GM10248 (cell line): ENCODE measurements at regions of chr19 and their contacts with region 1.

Region 1: GRCh38 chr19:1540365-1540925 is 16.6 kb downstream of the PLK5 start:
- DNase-seq: no peak
- CTCF ChIP-seq: no peak

Region 2: DNA sequence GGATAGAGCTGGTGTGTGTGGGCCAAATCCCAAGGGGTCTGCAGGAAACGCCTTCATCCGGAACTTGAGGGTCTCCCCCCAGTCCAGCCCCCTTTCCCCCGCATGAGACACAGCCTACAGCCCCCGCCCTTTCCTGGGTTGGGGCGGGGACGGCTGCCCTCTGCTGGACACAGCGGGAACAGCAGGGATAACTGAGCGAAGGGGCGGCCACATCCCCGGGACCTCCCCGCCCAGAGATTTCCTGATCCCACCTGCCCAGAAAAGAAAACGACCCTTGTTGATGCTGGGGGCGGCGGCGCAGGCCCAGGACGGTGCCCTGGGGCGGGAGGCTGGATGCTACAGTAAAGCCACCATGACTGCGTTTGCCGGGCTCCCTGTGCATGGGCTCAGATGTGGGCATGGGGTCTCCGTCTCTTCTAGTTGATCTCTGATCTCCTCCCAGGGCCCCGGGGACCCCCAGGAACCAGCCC is 227.1 kb after region 1 on chr19:
- CTCF ChIA-PET with region 1: interaction called, 12 read pairs
- POLR2A ChIA-PET with region 1: no interaction called
- DNase-seq: peak; percentile 88
- CTCF ChIP-seq: peak; percentile 98